Uterus (tissue), 4 donors: ENCODE measurements at regions of chr18 and their contacts with region 1.

Region 1: DNA sequence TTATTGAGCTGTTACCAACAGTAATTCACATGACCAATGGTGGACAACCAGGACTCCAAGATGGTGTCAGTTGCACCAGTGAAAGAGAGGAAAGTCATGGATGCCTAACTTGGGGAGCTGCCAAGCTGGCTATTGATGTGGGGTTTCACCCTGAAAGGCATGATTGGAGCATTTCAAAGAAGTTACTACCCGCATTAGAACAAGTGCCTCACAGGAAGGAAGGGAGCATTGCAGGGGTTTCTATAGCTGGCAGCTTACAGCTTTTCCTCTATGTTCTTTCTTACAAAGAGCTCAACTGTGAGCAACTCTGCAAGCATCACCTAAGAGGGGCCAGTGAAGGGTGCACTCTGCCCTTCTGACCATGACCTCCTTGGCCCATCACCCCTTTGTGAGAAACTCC is 93.1 kb downstream of the TNFRSF11A start:
- DNase-seq: no peak
- H3K4me3 ChIP-seq: no peak overlapping the region
- H3K27ac ChIP-seq: no peak overlapping the region
- H3K4me1 ChIP-seq: no peaks in the 10 kb centered on the region
- H3K27me3 ChIP-seq: no peaks in the 10 kb centered on the region
- CTCF ChIP-seq: no peak
- POLR2A ChIP-seq: no peak

Region 2: DNA sequence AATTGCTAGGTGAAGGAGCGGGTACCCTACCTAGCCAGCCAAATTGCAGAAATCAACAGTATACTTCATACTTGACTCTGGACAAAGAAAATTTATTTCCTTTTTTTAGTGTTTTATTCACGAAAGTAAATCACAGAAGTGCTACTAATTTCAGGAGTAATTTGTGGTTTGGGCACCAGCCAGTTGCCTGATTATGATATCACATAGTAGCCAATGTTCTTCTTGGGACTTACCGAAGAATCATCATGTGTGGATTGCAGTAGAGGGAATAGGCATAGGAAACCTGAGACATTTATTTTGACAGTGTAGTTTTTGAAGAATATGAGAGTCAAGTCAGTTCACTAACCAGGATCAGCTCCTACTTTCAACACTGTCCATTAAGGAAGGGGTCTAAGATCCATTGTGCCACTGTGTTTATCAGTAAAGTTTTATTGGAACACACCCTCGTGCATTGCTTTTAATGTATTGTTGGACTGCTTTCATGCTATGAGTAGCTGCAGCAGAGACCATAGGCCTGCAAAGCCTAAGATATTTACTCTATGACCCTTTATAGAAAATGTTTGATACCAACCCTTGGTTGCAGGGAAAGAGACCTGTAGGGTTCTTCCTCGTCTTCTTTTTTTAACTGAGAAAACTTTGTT is 61.1 kb before region 1 on chr18:
- intact Hi-C with region 1: loop called (anchors 10 kb)
- DNase-seq: no peak
- H3K4me3 ChIP-seq: no peak overlapping the region
- H3K27ac ChIP-seq: no peak overlapping the region
- H3K4me1 ChIP-seq: no peaks in the 10 kb centered on the region
- H3K27me3 ChIP-seq: no peaks in the 10 kb centered on the region
- CTCF ChIP-seq: no peak
- POLR2A ChIP-seq: no peak